GM10248 (cell line): ENCODE measurements at regions of chr3 and their contacts with region 1.

Region 1: DNA sequence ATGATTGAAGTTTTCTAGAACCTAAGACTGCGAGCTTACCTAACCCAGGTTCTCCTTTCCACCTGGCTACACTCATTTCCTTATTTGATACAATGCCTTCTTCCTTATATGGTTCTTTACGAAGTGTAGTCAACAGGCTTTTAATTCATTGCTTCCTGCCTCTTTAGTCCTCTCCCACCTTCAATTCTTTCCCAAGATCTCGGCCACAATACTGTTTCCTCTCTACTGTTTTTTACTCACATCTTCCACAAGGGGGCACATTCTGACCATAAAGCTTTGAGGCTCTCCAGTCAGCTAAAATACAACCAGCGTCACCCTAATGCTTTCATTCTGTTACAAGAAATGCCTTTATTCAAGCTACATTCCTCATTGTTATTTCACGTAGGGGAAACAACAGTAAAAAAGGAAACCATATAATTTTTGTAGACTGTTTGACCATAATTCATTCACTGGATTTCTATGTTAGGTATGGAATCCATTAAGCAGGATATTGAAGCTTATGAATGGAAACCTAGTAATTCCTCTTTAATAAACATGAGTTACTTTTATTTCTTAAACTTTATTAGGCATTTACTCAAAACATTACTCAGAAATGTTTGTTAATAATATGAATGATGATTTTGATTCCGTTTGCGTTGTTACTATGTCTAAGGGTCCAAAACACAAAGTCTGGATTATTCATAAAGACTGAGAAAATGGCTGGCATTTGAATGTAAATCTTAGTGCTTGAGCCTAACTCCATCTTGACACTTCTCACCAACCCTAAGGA is 29.5 kb upstream of the VEPH1 start:
- DNase-seq: peak; percentile 50
- CTCF ChIP-seq: peak; percentile 78

Region 2: DNA sequence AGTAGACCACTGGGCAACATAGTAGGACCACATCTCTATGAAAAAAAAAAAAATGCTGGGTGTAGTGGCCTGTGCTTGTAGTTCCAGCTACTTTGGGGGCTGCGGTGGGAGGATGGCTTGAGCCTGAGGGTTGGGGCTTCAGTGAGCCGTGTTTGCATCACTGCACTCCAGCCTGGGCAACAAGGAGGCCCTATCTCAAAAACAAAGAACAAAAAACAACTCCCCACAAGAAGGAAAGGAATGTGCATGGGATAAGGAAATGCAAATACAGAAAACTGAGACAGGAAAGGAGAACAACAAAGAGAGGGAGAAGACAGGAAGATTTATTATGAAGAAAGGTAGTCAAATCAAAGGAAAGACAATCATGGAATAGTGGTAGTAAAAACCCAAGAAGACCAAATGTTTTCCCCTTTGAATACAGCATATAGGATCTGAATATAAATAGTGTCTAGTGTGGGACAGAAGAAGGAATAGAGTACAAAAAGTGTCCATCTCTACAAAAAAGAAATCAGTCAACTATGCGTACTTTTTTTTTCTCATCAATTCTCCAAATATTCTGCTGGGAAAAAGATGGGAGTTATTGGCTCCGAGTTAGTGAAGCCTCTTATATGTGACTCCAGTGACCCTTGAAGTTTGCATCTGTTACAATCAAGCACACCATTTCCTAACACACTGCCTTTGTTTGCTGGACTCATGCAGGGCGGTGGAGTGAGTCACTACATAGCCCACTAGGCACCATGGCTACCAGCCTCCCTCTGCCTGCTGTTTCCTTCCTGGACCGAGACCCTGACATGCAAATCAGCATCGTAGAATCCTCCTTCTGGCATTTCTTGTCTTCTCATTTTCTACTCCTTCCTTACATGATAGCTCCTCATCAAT is 197.3 kb before region 1 on chr3:
- CTCF ChIA-PET with region 1: no interaction called
- POLR2A ChIA-PET with region 1: no interaction called
- DNase-seq: no peak
- CTCF ChIP-seq: no peak

Region 3: DNA sequence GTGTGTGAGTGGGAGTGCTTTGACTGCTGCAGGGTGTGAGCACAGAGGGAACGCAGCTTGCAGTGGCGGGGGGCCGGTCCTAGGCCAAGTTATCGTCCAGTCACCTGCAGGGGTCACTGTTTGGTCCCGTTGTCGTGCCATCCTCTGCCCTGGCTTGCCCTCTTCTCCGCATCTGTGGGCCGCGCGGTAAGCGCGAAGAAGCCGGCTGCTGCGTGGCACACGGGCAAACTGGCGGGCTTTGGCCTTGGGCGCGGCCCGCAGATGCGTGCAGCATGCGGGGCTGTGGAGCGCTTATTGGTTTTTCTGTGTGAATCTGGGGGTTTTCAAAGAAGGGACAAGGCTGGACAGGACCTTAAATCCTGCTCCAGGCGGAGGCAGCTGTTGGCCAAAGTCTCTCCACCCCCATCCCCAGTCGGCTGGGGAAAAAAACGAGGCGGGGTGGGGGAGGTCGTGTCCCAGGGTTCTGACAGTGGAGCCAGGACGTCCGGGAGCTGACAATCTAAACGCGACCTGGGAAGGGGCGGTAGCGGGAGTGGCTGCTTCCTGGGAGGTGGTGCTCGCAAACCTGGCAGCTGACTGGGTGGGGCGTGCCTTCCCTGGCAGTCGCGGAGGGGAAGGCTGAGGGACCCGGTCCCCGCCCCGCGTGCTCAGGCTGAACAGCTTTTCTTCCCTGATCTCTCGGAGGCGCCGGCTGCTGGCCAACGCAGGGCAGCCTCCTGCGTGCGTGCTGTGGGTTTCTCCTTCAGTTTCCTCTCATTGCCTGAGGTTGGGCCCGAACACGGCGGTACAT is 10.2 kb after region 1 on chr3:
- CTCF ChIA-PET with region 1: interaction called, 28 read pairs
- POLR2A ChIA-PET with region 1: no interaction called
- DNase-seq: no peak
- CTCF ChIP-seq: no peak

Region 4: GRCh38 chr3:157549498-157549897 is 16.8 kb after region 1 on chr3:
- CTCF ChIA-PET with region 1: interaction called, 28 read pairs
- POLR2A ChIA-PET with region 1: no interaction called
- DNase-seq: no peak
- CTCF ChIP-seq: no peak

Region 5: GRCh38 chr3:157572559-157573270 is 40.0 kb after region 1 on chr3:
- CTCF ChIA-PET with region 1: interaction called, 174 read pairs
- POLR2A ChIA-PET with region 1: interaction called, 3 read pairs
- DNase-seq: peak; percentile 48
- CTCF ChIP-seq: peak; percentile 60

Region 6: GRCh38 chr3:157594413-157594812 is 61.7 kb after region 1 on chr3:
- CTCF ChIA-PET with region 1: interaction called, 11 read pairs
- POLR2A ChIA-PET with region 1: no interaction called
- DNase-seq: no peak
- CTCF ChIP-seq: no peak

Region 7: DNA sequence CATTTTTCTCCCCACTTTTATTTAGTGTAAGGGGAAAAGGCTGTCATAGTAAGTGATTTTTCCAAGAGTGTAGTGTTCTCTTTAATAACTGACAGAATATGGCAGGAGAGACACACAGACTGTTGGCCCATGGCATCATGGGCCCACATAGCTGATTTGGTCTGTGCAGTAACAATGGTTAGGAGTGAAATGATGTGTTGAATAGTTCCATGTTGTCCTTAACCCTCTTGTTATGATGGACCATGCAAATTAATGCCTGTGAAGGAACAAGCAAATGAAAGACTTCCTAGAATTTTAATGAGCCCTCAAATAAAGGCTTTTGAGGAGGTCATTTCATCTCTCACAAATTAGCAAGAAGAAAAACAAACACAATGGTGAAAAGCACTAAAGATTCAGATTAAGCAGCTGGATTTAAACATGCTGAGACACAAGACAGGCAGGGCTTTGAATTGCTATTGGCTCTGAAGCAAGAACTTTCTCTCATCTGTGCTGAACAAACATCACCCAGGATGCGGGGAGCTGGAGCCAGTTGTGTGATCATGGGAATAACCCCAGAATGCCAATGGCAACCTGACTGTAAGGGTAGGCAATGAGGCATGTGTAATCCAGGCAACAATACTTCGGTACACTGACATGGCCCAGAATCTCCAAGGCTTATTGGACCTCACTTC is 107.2 kb after region 1 on chr3:
- CTCF ChIA-PET with region 1: no interaction called
- POLR2A ChIA-PET with region 1: no interaction called
- DNase-seq: no peak
- CTCF ChIP-seq: no peak